Right lobe of liver (tissue), 6 donors: ENCODE measurements at regions of chr9 and their contacts with region 1.

Region 1: DNA sequence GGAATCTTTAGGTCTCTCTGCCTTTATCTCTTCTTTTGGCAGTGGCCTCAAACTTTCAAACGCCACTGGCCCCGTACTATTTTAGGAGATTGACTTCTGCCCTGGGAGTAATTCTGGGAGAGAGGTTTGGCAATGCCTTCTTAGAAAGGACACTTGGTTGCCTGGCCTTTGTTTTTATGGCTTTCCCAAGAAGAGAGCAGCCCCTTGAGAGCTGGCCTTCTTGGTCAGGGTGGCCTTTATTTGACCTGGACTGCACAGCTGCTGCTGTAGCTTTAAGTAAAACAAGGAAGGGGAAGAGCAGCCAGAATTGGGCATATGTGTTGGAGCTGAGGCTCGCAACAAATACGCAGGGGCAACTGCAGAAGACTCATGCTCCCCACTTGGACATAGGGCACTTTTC is 60.8 kb downstream of the PTPN3 start:
- DNase-seq: no peak
- ATAC-seq: no peak
- H3K4me3 ChIP-seq: no peak overlapping the region
- H3K27ac ChIP-seq: peak overlapping the region in 1 of 3 donors; percentile 33
- H3K4me1 ChIP-seq: peaks cover 0 to 19% (median 0%) of the 10 kb centered on the region in 4 donors
- H3K27me3 ChIP-seq: no peaks in the 10 kb centered on the region
- CTCF ChIP-seq: no peak
- POLR2A ChIP-seq: no peak

Region 2: DNA sequence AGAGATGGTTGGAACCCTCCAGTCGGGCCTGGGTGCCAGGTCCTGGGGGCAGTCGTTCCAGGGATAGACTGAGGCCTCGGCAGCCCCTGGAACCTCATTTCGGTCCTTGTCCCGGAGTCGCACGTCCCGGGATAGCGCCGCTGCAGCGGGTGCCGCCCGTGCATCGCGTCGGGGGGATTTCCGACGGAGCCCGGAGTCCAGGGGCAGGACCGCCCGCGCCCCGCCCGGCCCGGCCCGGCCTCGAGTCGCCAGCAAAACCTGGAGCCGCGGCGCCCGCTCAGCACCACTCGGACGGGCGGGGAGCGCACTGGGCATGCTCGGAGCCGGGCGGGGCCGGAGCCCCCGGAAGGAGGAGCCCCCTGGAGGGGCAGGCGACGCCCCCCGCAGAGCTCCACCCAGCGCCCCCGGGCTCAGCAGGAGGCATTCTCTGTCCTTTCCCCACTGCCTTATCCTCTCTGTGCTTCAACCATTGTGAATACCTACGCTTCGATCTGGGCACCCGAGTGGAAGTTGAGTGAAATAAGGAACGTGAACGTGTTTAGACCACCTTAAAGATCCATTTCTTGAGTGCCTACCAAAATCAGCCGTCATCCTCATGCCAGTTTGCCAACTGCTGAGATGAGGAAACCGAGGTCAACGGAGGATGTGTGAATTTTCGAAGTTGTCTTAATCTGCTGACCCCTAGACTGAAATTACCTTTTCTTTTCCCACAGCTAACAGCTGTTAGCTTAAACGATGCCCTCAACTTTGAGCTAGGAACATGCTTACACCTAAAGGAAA is 62.5 kb after region 1 on chr9:
- intact Hi-C with region 1: loop called in 1 of 2 experiments (anchors 10 kb)
- DNase-seq: peak; percentile 70 to 81 (median 81)
- ATAC-seq: peak; percentile 83 to 93 (median 90)
- H3K4me3 ChIP-seq: peak overlapping the region; percentile 32 to 60 (median 49)
- H3K27ac ChIP-seq: peak overlapping the region; percentile 63 to 77 (median 70)
- H3K4me1 ChIP-seq: peaks cover 0 to 21% (median 6%) of the 10 kb centered on the region in 4 donors
- H3K27me3 ChIP-seq: no peaks in the 10 kb centered on the region
- CTCF ChIP-seq: peak in 1 of 4 donors; percentile 4
- POLR2A ChIP-seq: peak; percentile 80